Kidney (tissue), 22 donors: ENCODE measurements at regions of chr13 and their contacts with region 1.

Region 1: DNA sequence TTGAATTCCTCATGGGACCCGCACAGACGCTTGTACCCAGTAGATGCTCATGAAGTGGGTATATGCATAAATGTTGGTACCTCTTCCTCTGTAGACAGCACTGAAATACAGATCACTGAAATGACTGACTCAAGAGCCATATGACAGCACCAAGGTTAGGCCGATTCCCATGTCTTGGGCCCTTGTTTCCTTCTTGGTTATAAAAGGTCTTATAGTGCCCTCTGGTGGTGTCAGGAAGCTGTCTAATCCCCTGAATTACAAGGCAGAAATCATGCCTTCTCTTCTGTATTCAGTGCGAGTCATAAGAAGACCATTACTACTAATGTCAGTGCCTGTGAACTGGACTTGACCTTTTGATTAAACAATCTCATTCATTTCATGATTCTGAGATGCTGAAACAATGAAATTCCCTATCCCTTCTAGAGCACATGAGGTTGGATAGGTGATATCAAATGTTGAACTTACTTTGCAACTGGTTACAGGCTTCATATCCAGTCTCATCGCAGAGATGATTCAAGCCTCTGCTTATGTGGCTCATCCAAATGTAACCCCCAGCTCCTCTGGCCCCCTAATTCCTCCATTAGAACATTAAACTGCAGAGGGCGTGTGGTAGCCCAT is 59.7 kb downstream of the SPATA13 start:
- DNase-seq: peak in 4 of 5 donors; percentile 55 to 89 (median 72)
- H3K4me3 ChIP-seq: no peak overlapping the region
- H3K27ac ChIP-seq: peak overlapping the region in 1 of 2 donors; percentile 52
- H3K4me1 ChIP-seq: peaks cover 3 to 30% (median 30%) of the 10 kb centered on the region in 3 donors
- H3K27me3 ChIP-seq: no peaks in the 10 kb centered on the region
- CTCF ChIP-seq: peak; percentile 81

Region 2: GRCh38 chr13:23637829-23638228 is 582.4 kb before region 1 on chr13:
- intact Hi-C with region 1: no loop called
- DNase-seq: no peak
- H3K4me3 ChIP-seq: no peak overlapping the region
- H3K27ac ChIP-seq: no peak overlapping the region
- H3K4me1 ChIP-seq: peaks cover 0 to 5% (median 4%) of the 10 kb centered on the region in 3 donors
- H3K27me3 ChIP-seq: no peaks in the 10 kb centered on the region
- CTCF ChIP-seq: no peak

Region 3: GRCh38 chr13:23921451-23921888 is 298.7 kb before region 1 on chr13:
- intact Hi-C with region 1: loop called (anchors 10 kb)
- DNase-seq: peak in 4 of 5 donors; percentile 48 to 86 (median 69)
- H3K4me3 ChIP-seq: no peak overlapping the region
- H3K27ac ChIP-seq: no peak overlapping the region
- H3K4me1 ChIP-seq: no peaks in the 10 kb centered on the region
- H3K27me3 ChIP-seq: no peaks in the 10 kb centered on the region
- CTCF ChIP-seq: peak; percentile 67

Region 4: GRCh38 chr13:24020375-24020830 is 199.8 kb before region 1 on chr13:
- intact Hi-C with region 1: loop called (anchors 10 kb)
- DNase-seq: peak in 3 of 5 donors; percentile 54 to 85 (median 74)
- H3K4me3 ChIP-seq: no peak overlapping the region
- H3K27ac ChIP-seq: no peak overlapping the region
- H3K4me1 ChIP-seq: peaks cover 0 to 3% (median 0%) of the 10 kb centered on the region in 3 donors
- H3K27me3 ChIP-seq: no peaks in the 10 kb centered on the region
- CTCF ChIP-seq: peak; percentile 80